Activated CD4-positive, alpha-beta T cell treated with anti-CD3 and anti-CD28 coated beads for 36 hours (primary cell): ENCODE measurements at regions of chr7 and their contacts with region 1.

Region 1: DNA sequence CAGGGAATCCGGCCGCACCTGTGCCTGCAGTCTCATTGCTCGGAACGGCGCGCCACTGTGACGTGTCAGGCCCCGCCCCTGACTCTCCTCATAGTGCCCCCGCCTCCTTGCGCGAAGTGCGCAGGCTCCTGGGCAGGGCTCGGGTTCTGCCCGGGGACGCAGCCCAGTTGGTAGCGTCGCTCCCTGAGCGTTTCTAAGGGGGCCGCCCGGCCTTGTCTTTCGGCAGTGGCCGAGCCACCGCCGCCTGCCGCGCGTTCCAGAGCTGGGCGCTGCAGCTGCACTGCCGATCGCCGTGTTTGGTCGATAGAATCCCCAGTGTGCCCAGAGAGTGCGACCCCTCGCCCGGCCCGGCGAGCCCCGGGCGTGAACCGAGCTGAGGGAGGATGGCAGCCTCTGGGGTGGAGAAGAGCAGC is at the start of gene KLHL7:
- DNase-seq: peak; percentile 98
- ATAC-seq: peak; percentile 98
- H3K4me3 Mint-ChIP-seq: peak within 1 kb of the TSS; percentile 97
- H3K27ac Mint-ChIP-seq: peak within 1 kb of the TSS; percentile 94
- H3K4me1 Mint-ChIP-seq: peaks cover 32% of the 10 kb centered on the region
- H3K27me3 Mint-ChIP-seq: no peaks in the 10 kb centered on the region
- total RNA-seq, gene KLHL7: 18.1 to 20.8 TPM

Region 2: GRCh38 chr7:22822486-22823141 is 283.0 kb before region 1 on chr7 and contains the start of gene TOMM7:
- CTCF ChIA-PET with region 1: interaction called, 4 read pairs
- POLR2A ChIA-PET with region 1: no interaction called
- intact Hi-C with region 1: loop called (anchors 1 to 2 kb)
- DNase-seq: peak; percentile 92
- ATAC-seq: peak; percentile 81
- H3K4me3 Mint-ChIP-seq: peak within 1 kb of the TSS; percentile 98
- H3K27ac Mint-ChIP-seq: peak within 1 kb of the TSS; percentile 93
- H3K4me1 Mint-ChIP-seq: peaks cover 35% of the 10 kb centered on the region
- H3K27me3 Mint-ChIP-seq: peaks cover 6% of the 10 kb centered on the region
- total RNA-seq, gene TOMM7: 73.7 to 254 TPM

Region 3: GRCh38 chr7:22854158-22855048 is 251.2 kb before region 1 on chr7:
- CTCF ChIA-PET with region 1: no interaction called
- POLR2A ChIA-PET with region 1: no interaction called
- intact Hi-C with region 1: loop called (anchors 1 kb)
- DNase-seq: peak; percentile 89
- ATAC-seq: peak; percentile 74
- H3K4me3 Mint-ChIP-seq: peak overlapping the region; percentile 92
- H3K27ac Mint-ChIP-seq: peak overlapping the region; percentile 92
- H3K4me1 Mint-ChIP-seq: peaks cover 34% of the 10 kb centered on the region
- H3K27me3 Mint-ChIP-seq: peaks cover 2% of the 10 kb centered on the region

Region 4: GRCh38 chr7:22920672-22921071 is 185.0 kb before region 1 on chr7:
- CTCF ChIA-PET with region 1: no interaction called
- POLR2A ChIA-PET with region 1: no interaction called
- intact Hi-C with region 1: no loop called
- DNase-seq: no peak
- ATAC-seq: no peak
- H3K4me3 Mint-ChIP-seq: no peak overlapping the region
- H3K27ac Mint-ChIP-seq: no peak overlapping the region
- H3K4me1 Mint-ChIP-seq: no peaks in the 10 kb centered on the region
- H3K27me3 Mint-ChIP-seq: no peaks in the 10 kb centered on the region

Region 5: DNA sequence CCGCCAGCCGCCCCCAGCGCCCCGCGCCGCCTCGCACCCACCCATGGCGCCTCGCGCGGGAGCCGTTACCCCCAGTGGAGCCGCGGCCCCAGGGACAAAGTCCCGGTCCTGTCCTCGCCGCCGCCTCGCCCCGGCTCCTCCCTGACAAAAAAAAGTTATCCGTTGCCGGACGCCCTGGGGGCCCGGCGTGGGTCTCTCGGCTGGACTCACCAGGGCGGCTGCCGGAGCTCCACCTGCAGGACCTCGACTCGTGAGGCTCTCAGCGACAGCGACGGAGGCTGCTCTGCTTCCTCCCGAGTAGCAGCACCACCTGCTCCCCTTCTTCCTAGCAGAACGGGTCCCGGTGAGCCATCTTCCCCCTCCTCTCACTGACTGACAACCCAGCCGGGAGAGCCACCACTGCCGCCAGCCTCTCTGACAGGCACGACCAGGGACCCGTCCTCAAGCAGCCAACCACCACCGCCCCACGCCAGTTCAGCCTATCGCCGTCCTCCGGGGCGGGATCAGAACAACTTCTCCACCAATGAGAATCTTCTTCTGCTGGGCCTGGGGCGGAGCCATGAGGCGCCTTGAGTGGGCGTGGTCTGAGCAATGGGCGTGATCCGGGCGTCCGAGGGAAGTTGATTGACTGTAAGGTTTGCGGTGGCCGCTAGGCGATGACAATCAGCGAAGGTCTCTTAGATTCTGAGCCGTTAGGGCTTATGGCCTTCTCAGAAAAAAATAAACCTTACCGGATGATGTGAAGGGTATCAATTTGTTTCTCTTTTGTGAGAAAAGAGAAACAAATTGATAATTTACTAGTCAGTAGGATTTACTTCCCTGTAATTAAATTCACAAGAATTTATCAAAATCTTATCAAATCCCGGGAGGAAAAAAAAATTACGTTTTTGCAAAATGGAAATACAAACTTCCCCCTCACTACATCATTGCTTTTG is 91.7 kb before region 1 on chr7 and contains the start of gene HYCC1:
- CTCF ChIA-PET with region 1: interaction called, 4 read pairs
- POLR2A ChIA-PET with region 1: no interaction called
- intact Hi-C with region 1: loop called (anchors 1 kb)
- DNase-seq: peak; percentile 99
- ATAC-seq: peak; percentile 99
- H3K4me3 Mint-ChIP-seq: peak within 1 kb of the TSS; percentile 92
- H3K27ac Mint-ChIP-seq: peak within 1 kb of the TSS; percentile 83
- H3K4me1 Mint-ChIP-seq: peaks cover 24% of the 10 kb centered on the region
- H3K27me3 Mint-ChIP-seq: peaks cover 3% of the 10 kb centered on the region
- total RNA-seq, gene HYCC1: 19.2 to 23.9 TPM

Region 6: DNA sequence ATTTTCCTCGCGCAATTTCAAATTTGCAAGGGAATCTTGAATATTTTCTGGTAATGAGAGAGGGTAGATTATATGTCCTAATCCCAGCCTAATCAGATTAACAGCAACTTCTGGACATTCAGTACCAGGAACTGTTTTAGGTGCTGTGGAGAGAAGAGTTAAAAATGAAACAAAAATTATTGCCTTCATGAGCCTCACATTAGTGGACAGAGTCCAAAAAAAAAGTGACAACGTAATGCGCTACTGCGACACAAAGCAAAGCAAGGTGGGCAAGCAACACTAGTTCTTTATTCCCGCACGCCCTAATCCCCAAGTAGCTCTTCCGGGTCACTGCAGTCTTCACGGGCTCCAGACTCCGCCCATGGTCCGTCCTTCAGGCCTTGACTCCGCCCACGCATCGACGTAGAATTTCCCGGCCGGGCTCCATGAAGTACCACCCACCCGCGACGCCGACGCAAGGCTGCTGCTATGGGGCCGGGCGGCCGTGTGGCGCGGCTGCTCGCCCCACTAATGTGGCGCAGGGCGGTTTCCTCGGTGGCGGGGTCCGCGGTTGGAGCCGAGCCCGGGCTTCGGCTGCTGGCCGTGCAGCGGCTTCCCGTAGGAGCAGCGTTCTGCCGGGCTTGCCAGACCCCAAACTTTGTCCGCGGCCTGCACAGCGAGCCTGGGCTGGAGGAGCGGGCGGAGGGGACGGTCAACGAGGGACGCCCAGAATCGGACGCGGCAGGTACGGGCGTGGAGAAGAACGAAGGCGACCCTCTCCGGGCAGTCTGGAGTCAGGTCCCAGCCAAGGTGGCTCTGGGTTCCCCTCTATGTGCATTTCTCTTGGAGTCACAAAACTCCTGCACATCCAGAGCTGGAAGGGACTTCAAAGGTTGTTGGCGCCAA is 193.5 kb after region 1 on chr7 and contains the start of gene MALSU1:
- CTCF ChIA-PET with region 1: no interaction called
- POLR2A ChIA-PET with region 1: no interaction called
- intact Hi-C with region 1: loop called in 1 of 2 experiments (anchors 1 kb)
- DNase-seq: peak; percentile 99
- ATAC-seq: peak; percentile 97
- H3K4me3 Mint-ChIP-seq: peak within 1 kb of the TSS; percentile 98
- H3K27ac Mint-ChIP-seq: peak within 1 kb of the TSS; percentile 97
- H3K4me1 Mint-ChIP-seq: peaks cover 38% of the 10 kb centered on the region
- H3K27me3 Mint-ChIP-seq: no peaks in the 10 kb centered on the region
- total RNA-seq, gene MALSU1: 97.7 to 98.4 TPM

Region 7: DNA sequence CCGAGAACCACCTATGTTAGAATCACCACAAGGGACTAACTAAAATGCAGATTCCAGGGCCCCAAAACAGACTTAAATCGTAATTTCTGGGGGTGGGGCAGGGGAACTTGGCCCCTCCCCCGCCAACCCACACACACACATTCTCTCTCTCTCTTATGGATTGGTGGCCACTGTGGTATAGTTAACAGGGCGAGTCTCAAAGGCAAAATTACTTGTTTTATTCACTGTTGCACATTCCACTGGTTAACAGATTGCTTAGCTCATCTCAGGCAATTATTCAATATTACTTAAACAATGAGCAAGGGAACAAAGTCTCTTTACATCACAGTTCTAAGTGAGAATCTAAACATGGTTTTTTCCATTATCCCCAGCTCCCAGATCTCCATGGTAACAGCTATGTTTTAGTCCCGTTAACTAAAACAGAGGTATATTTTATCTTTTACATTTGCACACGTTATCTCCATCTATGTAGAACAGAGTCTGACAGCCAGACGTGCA is 326.1 kb after region 1 on chr7:
- CTCF ChIA-PET with region 1: no interaction called
- POLR2A ChIA-PET with region 1: no interaction called
- intact Hi-C with region 1: no loop called
- DNase-seq: no peak
- ATAC-seq: no peak
- H3K4me3 Mint-ChIP-seq: no peak overlapping the region
- H3K27ac Mint-ChIP-seq: no peak overlapping the region
- H3K4me1 Mint-ChIP-seq: peaks cover 2% of the 10 kb centered on the region
- H3K27me3 Mint-ChIP-seq: peaks cover 25% of the 10 kb centered on the region

Region 8: GRCh38 chr7:23679898-23680413 is 574.3 kb after region 1 on chr7 and contains the start of gene FAM221A:
- CTCF ChIA-PET with region 1: no interaction called
- POLR2A ChIA-PET with region 1: no interaction called
- intact Hi-C with region 1: loop called in 1 of 2 experiments (anchors 1 kb)
- DNase-seq: peak; percentile 93
- ATAC-seq: peak; percentile 98
- H3K4me3 Mint-ChIP-seq: peak within 1 kb of the TSS; percentile 85
- H3K27ac Mint-ChIP-seq: peak within 1 kb of the TSS; percentile 76
- H3K4me1 Mint-ChIP-seq: peaks cover 8% of the 10 kb centered on the region
- H3K27me3 Mint-ChIP-seq: no peaks in the 10 kb centered on the region
- total RNA-seq, gene FAM221A: 5.3 to 8.1 TPM